ENCODE measurements at regions of chr12 and their contacts with region 1.

Region 1: GRCh38 chr12:53352331-53353256 is 16.4 kb upstream of the SP7 start:
- DNase-seq: peak; percentile 90
- H3K4me3 Mint-ChIP-seq: no peak overlapping the region
- H3K27ac Mint-ChIP-seq: peak overlapping the region; percentile 2
- H3K4me1 Mint-ChIP-seq: peaks cover 9% of the 10 kb centered on the region
- H3K27me3 Mint-ChIP-seq: peaks cover 5% of the 10 kb centered on the region

Region 2: GRCh38 chr12:53170876-53171724 is 181.5 kb before region 1 on chr12:
- CTCF ChIA-PET with region 1: no interaction called
- DNase-seq: no peak
- H3K4me3 Mint-ChIP-seq: no peak overlapping the region
- H3K27ac Mint-ChIP-seq: no peak overlapping the region
- H3K4me1 Mint-ChIP-seq: peaks cover 2% of the 10 kb centered on the region
- H3K27me3 Mint-ChIP-seq: no peaks in the 10 kb centered on the region

Region 3: DNA sequence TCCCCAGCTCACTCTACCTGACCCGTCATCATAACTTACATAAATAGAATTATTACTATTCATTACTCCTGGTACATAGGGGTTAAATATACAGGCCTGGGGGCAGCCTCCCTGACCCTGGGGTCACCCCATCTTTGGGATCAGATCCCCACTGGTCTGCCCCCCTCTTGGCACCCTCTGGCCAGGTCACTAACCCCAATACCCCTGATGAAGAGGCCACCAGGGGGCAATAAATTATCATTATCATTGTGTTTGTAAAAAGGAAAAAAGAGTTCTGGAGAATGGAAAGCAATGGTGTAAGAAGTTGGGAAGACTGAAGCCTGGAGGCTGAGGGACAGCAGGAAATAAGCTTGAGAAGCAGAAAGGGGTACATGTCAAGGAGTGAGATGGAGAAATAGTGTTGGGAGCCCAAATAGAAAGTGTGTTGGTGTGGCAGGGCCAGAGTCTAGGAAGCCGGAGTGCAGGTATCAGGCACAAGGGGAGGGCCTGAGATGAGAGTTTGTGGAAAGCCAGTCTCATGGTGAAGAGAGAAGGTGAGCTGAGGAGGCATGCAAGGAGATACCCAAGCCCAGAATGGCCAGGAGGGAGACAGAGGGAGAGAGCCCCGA is 25.1 kb before region 1 on chr12:
- CTCF ChIA-PET with region 1: interaction called, 178 read pairs
- DNase-seq: no peak
- H3K4me3 Mint-ChIP-seq: no peak overlapping the region
- H3K27ac Mint-ChIP-seq: no peak overlapping the region
- H3K4me1 Mint-ChIP-seq: peaks cover 25% of the 10 kb centered on the region
- H3K27me3 Mint-ChIP-seq: peaks cover 64% of the 10 kb centered on the region

Region 4: DNA sequence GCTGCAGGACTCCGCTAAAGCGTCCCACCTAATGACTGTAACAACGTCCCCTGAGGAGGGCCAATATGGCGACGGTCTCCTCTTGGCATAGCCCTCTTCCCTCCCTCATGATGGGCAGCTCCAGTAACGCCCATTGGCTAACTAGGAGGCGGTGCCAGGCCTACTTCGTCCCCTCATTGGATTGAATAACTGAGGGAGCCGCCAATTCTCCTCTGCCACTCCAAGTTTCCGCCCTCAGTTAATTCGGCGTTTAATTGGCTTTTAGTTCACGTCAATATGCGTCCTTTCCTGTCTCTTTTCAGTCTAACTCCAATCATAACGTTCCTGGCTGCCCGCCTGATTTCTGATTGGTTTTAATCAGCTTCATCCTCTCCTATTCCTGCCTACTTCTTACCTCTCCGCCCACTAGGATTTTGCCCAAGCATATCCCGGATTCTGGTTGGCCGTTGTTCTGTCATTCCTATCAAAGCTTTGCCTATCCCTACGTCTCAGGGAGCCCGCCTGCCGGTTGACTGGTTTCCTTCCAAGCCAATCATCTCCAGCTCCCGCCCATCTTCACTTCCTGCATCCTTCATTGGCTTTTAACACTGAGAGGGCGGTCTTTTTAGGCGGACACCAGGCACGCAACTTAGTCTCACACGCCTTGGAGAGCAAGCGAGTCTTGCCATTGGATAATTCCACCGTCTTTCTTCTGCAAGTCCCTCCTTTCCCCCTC is 27.0 kb after region 1 on chr12:
- CTCF ChIA-PET with region 1: interaction called, 78 read pairs
- DNase-seq: peak; percentile 100
- H3K4me3 Mint-ChIP-seq: no peak overlapping the region
- H3K27ac Mint-ChIP-seq: no peak overlapping the region
- H3K4me1 Mint-ChIP-seq: peaks cover 43% of the 10 kb centered on the region
- H3K27me3 Mint-ChIP-seq: no peaks in the 10 kb centered on the region

Region 5: GRCh38 chr12:53418221-53418620 is 65.6 kb after region 1 on chr12:
- CTCF ChIA-PET with region 1: interaction called, 162 read pairs
- DNase-seq: no peak
- H3K4me3 Mint-ChIP-seq: no peak overlapping the region
- H3K27ac Mint-ChIP-seq: no peak overlapping the region
- H3K4me1 Mint-ChIP-seq: peaks cover 26% of the 10 kb centered on the region
- H3K27me3 Mint-ChIP-seq: no peaks in the 10 kb centered on the region

Region 6: GRCh38 chr12:53476769-53477209 is 124.2 kb after region 1 on chr12:
- CTCF ChIA-PET with region 1: interaction called, 16 read pairs
- DNase-seq: no peak
- H3K4me3 Mint-ChIP-seq: no peak overlapping the region
- H3K27ac Mint-ChIP-seq: peak overlapping the region; percentile 55
- H3K4me1 Mint-ChIP-seq: peaks cover 28% of the 10 kb centered on the region
- H3K27me3 Mint-ChIP-seq: no peaks in the 10 kb centered on the region

Region 7: GRCh38 chr12:53652366-53652765 is 299.8 kb after region 1 on chr12:
- CTCF ChIA-PET with region 1: no interaction called
- DNase-seq: no peak
- H3K4me3 Mint-ChIP-seq: no peak overlapping the region
- H3K27ac Mint-ChIP-seq: no peak overlapping the region
- H3K4me1 Mint-ChIP-seq: no peaks in the 10 kb centered on the region
- H3K27me3 Mint-ChIP-seq: no peaks in the 10 kb centered on the region